Activated T-helper 1 cell treated with anti-CD3 and anti-CD28 coated beads, Interleukin-12 subunit alpha, Interleukin-12 subunit beta, Interleukin-2, Interleukin-4 antibody, amounts not matched to agents 30 ng/mL and 10 ng/mL and 1 ng/mL, durations not matched to agents 14 hours and 24 hours and 36 hours (primary cell): ENCODE measurements at regions of chr2 and their contacts with region 1.

Region 1: DNA sequence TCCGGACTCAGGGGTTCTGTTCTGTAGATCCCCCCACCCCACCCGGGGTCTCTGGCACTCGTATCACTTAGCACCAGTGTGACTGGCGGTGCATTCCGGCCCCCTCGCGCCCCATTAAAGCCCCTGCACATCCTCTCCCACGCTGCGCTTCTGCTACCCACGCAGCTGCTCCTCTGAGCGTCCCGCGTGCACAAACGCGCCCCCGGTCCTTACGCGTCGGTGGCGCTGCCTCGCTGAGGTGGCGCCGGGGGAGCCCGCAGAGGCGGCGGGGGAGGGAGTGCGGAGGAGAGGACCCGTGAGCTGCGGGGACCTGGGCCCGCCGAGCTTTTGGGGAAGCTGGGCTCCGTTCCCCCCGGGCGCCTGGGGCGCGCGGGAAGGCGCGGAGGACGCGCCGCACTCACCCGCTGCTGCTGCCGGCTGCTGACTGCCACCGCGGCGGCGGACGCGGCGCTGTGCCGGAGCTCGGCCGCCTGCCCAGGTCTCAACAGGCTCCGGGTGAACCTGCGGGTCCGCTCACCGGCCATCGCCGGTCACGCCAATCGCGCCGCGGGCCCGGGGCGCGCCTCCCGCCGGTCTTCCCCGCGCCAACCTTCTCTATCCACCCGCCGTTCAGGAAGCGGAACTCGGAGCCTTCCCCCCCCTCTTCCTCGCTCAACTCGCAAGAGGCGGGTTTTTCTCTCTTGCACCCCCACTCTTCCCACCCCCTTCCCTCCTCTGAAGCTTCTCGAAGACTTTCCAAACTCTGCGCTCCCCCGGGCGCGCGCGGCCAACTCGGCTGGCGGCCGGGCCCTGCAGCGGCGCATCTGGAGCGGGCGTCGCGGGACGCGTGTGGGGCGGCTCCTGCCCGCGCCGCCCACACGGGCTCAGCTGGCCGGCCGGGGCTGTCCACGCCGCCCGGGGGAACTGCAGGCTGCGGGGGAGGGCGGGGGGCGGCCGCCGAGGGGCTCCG is at the start of gene DOCK10:
- DNase-seq: peak; percentile 50
- H3K4me3 Mint-ChIP-seq: peak within 1 kb of the TSS; percentile 96
- H3K27ac Mint-ChIP-seq: peak within 1 kb of the TSS; percentile 98
- H3K4me1 Mint-ChIP-seq: peaks cover 58% of the 10 kb centered on the region
- H3K27me3 Mint-ChIP-seq: peaks cover 5% of the 10 kb centered on the region
- total RNA-seq, gene DOCK10: 144 and 159 TPM in 2 replicates

Region 2: DNA sequence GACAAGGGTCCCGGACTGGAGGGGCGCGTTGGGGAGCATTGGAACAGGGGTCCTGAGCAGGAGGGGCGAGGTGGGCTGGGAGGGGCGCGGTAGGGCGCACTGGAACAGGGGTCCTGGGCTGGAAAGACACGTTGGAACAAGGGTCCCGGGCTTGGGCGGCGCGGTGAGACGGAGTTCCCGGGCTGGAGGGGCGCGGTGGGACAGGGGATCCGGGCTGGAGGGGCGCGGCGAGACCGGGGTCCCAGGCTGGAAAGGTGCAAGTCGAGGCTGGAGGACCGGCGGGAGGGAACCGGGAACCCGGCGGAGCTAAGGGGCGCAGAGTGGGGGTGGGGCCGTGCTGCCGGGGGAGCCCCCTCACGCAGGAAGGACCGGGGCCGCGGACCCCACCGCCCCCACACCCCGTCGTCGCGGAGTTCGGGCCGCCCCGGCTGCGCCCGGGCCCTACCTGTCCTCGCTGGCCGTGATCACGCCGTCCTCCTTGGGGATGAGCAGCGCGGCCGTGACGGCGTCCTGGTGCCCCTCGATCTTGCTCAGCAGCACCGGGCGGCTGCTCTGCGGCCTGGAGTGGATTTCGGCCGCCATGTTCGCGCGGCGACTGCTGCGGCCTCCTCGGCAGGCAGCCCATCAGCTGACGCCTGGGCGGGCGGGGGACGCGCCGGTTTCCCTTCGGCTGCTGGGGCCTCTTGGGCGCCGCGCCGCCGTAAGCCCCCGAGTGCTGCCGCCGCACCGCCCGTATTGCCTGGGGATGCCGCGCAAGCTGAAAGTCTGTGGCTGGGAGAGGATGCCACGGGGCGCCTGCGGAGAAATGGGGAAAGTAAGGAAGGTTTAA is 1097.2 kb before region 1 on chr2 and contains the start of gene WDFY1:
- intact Hi-C with region 1: loop called (anchors 5 kb)
- DNase-seq: peak; percentile 74
- H3K4me3 Mint-ChIP-seq: peak within 1 kb of the TSS; percentile 87
- H3K27ac Mint-ChIP-seq: peak within 1 kb of the TSS; percentile 86
- H3K4me1 Mint-ChIP-seq: peaks cover 60% of the 10 kb centered on the region
- H3K27me3 Mint-ChIP-seq: no peaks in the 10 kb centered on the region
- total RNA-seq, gene WDFY1: 17.9 and 21.8 TPM in 2 replicates

Region 3: DNA sequence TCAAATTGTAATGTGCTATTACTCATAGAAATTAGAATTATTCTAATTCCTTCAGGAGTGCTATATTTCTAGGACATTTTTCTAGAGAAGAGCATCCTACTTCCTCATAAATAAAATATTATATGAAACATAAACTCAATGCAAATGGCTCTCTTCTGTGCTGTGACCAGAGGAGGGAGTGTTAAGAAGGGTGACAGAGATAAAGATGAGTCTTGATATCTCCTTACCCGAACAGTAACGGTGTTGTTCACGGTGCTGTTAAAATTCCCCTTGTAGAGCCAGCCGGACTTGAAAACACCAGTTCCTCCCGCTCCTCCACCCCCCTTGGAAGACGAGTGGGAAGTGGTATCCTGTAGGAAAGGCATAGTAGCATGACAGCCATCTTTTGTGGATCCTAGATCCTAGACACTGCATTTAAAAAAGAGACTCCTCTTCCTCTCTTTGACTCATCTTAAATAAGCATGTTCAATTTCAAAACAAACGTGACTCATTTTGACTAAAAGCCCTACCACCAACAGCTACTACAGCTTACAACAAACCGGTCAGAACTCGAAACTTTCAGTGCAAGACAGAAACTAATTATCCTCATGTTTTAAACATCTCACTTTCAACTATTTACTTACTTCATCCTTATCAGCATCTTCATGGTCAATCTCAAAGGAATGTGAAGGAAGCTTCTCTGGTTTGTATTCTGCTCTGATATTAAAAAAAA is 156.1 kb before region 1 on chr2:
- intact Hi-C with region 1: loop called (anchors 1 kb)
- DNase-seq: no peak
- H3K4me3 Mint-ChIP-seq: no peak overlapping the region
- H3K27ac Mint-ChIP-seq: peak overlapping the region; percentile 67
- H3K4me1 Mint-ChIP-seq: peaks cover 77% of the 10 kb centered on the region
- H3K27me3 Mint-ChIP-seq: no peaks in the 10 kb centered on the region

Region 4: GRCh38 chr2:224946895-224947294 is 95.2 kb before region 1 on chr2:
- intact Hi-C with region 1: loop called (anchors 1 kb)
- DNase-seq: no peak
- H3K4me3 Mint-ChIP-seq: peak overlapping the region; percentile 90
- H3K27ac Mint-ChIP-seq: peak overlapping the region; percentile 96
- H3K4me1 Mint-ChIP-seq: peaks cover 91% of the 10 kb centered on the region
- H3K27me3 Mint-ChIP-seq: no peaks in the 10 kb centered on the region

Region 5: GRCh38 chr2:225010804-225011203 is 31.3 kb before region 1 on chr2:
- intact Hi-C with region 1: loop called (anchors 1 kb)
- DNase-seq: no peak
- H3K4me3 Mint-ChIP-seq: peak overlapping the region; percentile 57
- H3K27ac Mint-ChIP-seq: peak overlapping the region; percentile 90
- H3K4me1 Mint-ChIP-seq: peaks cover 75% of the 10 kb centered on the region
- H3K27me3 Mint-ChIP-seq: no peaks in the 10 kb centered on the region

Region 6: DNA sequence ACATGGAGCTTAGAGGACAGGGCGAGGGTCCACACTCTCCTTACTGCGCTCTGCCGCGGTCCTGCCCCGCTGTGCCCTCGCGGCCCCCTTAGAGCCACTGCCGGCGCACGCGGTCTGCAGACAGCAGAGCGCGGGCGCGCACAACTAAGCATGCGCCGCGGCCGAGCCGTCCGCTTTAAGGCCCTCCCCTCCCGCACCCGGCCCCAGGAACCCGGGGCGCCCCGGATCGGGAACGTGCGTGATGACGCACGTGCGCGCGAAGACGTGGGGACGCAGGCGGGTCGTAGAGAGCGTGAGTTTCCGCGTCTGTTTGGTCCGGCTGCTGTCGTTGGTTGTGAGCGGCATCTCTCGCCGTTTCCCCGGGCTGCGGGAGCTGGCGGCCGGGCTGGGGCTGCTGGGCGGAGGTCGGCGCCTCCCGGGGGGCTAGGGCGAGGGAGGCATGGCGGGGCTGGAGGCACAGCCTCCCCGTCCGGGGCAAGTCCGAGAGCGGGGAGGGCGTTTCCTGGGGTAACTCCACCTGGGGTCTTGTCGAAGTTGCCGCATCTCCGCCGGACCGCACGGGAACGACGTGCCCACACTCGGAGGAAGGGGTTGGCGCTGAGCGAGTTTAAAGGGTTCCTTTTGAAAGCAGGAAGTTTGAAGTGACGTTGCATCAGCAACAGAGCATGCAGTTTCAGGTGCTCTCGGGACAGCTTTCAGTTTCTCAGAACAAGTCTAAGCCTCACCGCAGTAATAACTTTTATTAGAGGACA is 1793.8 kb after region 1 on chr2 and contains the start of gene RHBDD1:
- intact Hi-C with region 1: loop called (anchors 5 kb)
- DNase-seq: peak; percentile 93
- H3K4me3 Mint-ChIP-seq: peak within 1 kb of the TSS; percentile 92
- H3K27ac Mint-ChIP-seq: peak within 1 kb of the TSS; percentile 99
- H3K4me1 Mint-ChIP-seq: peaks cover 62% of the 10 kb centered on the region
- H3K27me3 Mint-ChIP-seq: no peaks in the 10 kb centered on the region
- total RNA-seq, gene RHBDD1: 39.9 and 48.0 TPM in 2 replicates